CD14-positive monocyte (primary cell): ENCODE measurements at regions of chr1 and their contacts with region 1.

Region 1: DNA sequence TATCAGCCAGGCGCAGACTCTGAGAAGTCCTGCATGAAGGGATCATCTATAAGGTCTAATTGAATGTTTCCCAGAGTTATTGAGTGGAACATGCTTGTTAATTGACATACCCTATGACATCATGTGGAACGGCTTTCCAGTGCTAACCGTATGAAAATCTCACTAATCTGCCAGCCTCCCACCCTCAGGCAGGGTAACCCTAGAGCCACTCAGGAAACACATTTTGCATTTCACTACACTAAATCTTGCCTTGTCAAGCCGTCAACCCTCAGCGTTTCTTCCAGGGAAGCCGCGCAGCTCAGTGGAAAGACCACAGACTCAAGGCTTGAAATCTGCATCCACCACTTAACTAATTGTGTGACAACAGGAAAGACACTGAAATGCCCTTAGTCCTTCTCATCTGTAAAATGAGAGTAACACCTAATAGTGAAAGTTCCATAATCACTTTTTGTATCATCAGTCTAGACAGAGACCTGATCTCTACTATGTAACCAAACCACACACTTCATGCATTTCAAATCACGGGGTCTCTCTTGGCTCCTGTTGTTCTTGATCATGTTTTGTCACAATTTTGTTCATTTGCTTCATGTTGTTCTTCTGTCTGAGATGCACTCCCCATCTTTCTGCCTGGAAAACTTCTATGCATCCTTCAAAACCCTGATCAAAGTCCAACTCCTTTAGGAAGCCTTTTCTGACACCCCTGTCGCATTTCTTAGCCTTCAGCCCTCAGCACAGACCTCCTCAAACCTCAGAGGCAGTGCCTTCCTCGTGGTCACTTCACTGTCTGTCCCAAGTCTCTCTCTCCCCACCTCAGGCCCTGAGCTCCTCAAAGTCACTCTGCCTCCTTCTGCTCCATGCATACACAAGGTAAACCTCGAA is 246.5 kb downstream of the TOMM20 start:
- DNase-seq: no peak
- H3K4me3 ChIP-seq: no peak overlapping the region
- H3K4me3 Mint-ChIP-seq: no peak overlapping the region
- H3K27ac ChIP-seq: no peak overlapping the region
- H3K27ac Mint-ChIP-seq: peak overlapping the region in 4 of 7 donors; percentile 19 to 35 (median 26)
- H3K4me1 ChIP-seq: peaks cover 46 to 82% of the 10 kb centered on the region in 2 donors
- H3K4me1 Mint-ChIP-seq: peaks cover 65% of the 10 kb centered on the region
- H3K27me3 ChIP-seq: no peaks in the 10 kb centered on the region
- H3K27me3 Mint-ChIP-seq: peaks cover 0 to 4% (median 4%) of the 10 kb centered on the region in 3 donors
- CTCF ChIP-seq: no peak

Region 2: GRCh38 chr1:234918181-234918841 is 36.2 kb after region 1 on chr1:
- intact Hi-C with region 1: loop called (anchors 5 kb)
- DNase-seq: peak in 2 of 3 donors; percentile 55
- H3K4me3 ChIP-seq: peak overlapping the region in 1 of 3 experiments; percentile 60
- H3K4me3 Mint-ChIP-seq: peak overlapping the region in 1 of 2 donors; percentile 65
- H3K27ac ChIP-seq: peak overlapping the region in 1 of 2 donors; percentile 13
- H3K27ac Mint-ChIP-seq: peak overlapping the region in 4 of 7 donors; percentile 4 to 90 (median 68)
- H3K4me1 ChIP-seq: peaks cover 40 to 53% of the 10 kb centered on the region in 2 donors
- H3K4me1 Mint-ChIP-seq: peaks cover 50% of the 10 kb centered on the region
- H3K27me3 ChIP-seq: no peaks in the 10 kb centered on the region
- H3K27me3 Mint-ChIP-seq: peaks cover 0 to 3% (median 0%) of the 10 kb centered on the region in 3 donors
- CTCF ChIP-seq: no peak